ENCODE measurements at regions of chrX and their contacts with region 1.

Region 1: DNA sequence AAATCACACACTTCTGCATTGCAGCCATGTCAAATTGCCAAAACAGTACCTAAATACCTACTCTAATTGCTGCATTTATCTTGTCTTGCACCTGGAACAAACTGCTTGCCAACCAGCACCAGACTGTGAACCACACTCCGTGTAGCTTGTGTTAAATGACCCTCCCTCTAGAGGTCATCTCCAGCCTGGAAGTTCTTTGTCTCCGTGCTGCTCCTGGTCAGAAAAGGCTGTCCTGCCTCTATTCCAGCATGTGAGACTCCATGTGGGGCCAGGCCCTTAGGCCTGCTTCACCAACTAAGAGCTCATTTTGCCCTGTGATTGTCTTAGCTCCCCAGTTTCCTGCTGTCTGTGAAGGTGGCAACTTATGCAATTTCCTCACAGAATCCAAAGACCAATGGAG is 28.3 kb downstream of the CNGA2 start:
- DNase-seq: no peak
- H3K4me3 ChIP-seq: no peak overlapping the region
- H3K27me3 ChIP-seq: no peaks in the 10 kb centered on the region
- CTCF ChIP-seq: no peak

Region 2: DNA sequence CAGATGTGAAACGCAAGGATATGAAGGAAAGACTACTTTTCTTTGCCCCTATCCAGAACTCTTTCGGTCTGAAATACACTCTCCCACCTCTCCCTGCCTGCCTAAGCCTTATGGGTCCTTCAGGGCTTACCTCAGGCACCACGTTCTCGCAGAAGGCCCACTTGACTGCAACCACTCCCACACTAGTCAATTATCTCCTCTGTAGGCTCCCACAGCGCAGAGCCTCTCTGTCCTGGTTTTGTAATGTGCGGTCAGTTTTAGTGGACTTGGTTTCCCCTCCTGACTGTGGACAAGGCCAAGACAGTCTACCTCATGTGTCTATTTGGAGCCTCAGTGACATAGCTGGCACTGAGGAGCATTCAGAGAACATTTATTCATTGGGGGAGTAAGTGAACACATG is 17.2 kb before region 1 on chrX:
- CTCF ChIA-PET with region 1: no interaction called
- POLR2A ChIA-PET with region 1: no interaction called
- DNase-seq: no peak
- H3K4me3 ChIP-seq: no peak overlapping the region
- H3K27me3 ChIP-seq: no peaks in the 10 kb centered on the region; the same call in 1 of the 2 replicates
- CTCF ChIP-seq: no peak

Region 3: GRCh38 chrX:151776181-151776731 is 13.5 kb after region 1 on chrX:
- CTCF ChIA-PET with region 1: no interaction called
- POLR2A ChIA-PET with region 1: interaction called, 11 read pairs
- DNase-seq: no peak
- H3K4me3 ChIP-seq: no peak overlapping the region
- H3K27me3 ChIP-seq: no peaks in the 10 kb centered on the region
- CTCF ChIP-seq: no peak

Region 4: GRCh38 chrX:152299787-152300186 is 537.0 kb after region 1 on chrX:
- CTCF ChIA-PET with region 1: no interaction called
- POLR2A ChIA-PET with region 1: no interaction called
- DNase-seq: no peak
- H3K4me3 ChIP-seq: no peak overlapping the region
- H3K27me3 ChIP-seq: no peaks in the 10 kb centered on the region
- CTCF ChIP-seq: no peak